GM18951 (cell line): ENCODE measurements at regions of chr21 and their contacts with region 1.

Region 1: GRCh38 chr21:39715804-39716397 is 29.1 kb upstream of the IGSF5 start:
- POLR2A ChIP-seq: no peak

Region 2: GRCh38 chr21:39422527-39423241 is 293.2 kb before region 1 on chr21:
- in situ Hi-C with region 1: no loop called
- POLR2A ChIP-seq: no peak

Region 3: DNA sequence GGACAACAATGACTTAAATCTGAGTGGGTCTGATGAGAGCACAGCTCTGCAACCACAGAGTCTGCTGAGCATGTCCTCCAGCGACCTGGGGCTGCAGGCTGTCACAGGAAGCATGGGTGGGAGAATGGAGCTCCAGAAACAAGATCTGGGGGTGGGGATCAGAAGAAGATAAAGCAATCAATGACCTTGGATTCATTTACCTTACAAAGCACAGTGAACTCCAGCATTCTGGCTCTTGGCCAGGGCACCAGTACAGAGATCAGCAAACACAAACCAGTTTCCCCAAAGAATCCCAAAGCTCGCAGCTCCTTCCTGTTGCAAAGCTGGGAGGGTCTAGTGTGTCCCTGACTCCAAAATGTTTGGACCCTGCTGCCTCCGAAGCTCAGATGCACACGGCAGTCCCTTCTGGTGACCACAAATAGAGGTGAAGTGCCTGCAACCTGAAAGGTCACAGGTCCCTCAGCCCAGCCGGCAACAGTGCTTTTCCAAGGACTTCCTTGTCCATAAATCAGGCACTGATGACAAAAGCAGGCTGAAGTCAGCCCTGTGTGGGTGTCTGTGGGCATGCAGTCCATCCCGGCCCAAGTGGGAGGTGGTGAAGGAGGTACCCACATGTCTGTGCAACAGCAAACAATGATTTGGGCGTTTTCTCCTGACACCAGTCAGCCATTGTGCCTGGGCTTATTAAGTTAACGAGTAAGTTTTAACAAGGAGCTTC is 188.1 kb before region 1 on chr21:
- in situ Hi-C with region 1: loop called (anchors 10 kb)
- POLR2A ChIP-seq: no peak